HepG2 (cell line): ENCODE measurements at regions of chr22 and their contacts with region 1.

Region 1: GRCh38 chr22:28800308-28801077 is at the start of gene XBP1:
- DNase-seq: peak; percentile 89
- ATAC-seq: peak; percentile 95
- H3K4me3 ChIP-seq: peak within 1 kb of the TSS; percentile 66 to 99 (median 82)
- H3K27ac ChIP-seq: peak within 1 kb of the TSS; percentile 98
- H3K4me1 ChIP-seq: peaks cover 42% of the 10 kb centered on the region
- H3K27me3 ChIP-seq: no peaks in the 10 kb centered on the region; a peak in 1 of 5 replicates
- CTCF ChIP-seq: no peak
- EP300 ChIP-seq: no peak
- POLR2A ChIP-seq: peak; percentile 91 to 98
- RAD21 ChIP-seq: peak; percentile 49; the same call in 1 of the 2 replicates
- total RNA-seq, gene XBP1: 313 and 427 TPM in 2 replicates

Region 2: DNA sequence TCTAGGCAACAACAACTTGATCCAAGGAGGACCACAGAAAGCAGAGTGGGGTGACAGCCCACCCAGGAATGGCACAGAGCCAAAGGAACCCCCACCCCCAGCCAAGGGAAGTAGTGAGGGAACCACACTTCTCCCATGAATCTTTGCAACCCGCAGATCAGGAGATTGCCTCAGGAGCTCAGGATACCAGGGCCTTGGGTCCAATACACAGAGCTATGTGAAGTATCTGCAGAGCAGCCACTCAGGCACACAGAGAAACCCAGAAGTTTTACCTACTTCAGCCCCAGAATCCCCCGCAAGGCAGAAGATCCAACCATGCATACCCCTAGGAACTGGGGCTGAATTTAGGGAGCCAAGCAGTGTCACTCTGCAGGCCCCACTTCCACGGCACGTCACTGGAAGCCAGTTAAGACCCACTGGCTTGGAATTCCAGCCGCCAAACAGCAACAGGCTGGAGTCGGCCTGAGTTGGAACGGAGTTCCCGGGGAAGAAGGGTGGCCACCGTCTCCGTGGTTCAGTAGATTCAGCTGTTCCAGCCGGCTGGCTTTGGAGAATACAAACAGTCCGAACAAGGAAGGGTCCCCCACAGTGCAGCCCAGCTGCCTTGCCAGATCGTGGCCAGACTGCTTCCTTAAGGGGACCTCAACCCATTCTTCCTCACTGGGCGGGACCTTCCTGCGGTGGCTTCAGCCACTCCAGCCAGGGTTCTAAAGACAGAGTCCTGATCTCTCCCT is 294.9 kb before region 1 on chr22:
- CTCF ChIA-PET with region 1: no interaction called
- POLR2A ChIA-PET with region 1: no interaction called
- in situ Hi-C with region 1: no loop called
- intact Hi-C with region 1: no loop called
- DNase-seq: no peak
- ATAC-seq: no peak
- H3K4me3 ChIP-seq: no peak overlapping the region
- H3K27ac ChIP-seq: no peak overlapping the region
- H3K4me1 ChIP-seq: no peaks in the 10 kb centered on the region
- H3K27me3 ChIP-seq: no peaks in the 10 kb centered on the region; a peak in 1 of 5 replicates
- CTCF ChIP-seq: no peak
- EP300 ChIP-seq: no peak
- POLR2A ChIP-seq: no peak
- RAD21 ChIP-seq: no peak

Region 3: GRCh38 chr22:28594797-28595462 is 205.6 kb before region 1 on chr22:
- CTCF ChIA-PET with region 1: no interaction called
- POLR2A ChIA-PET with region 1: no interaction called
- in situ Hi-C with region 1: no loop called
- intact Hi-C with region 1: no loop called
- DNase-seq: peak; percentile 54
- ATAC-seq: peak; percentile 82
- H3K4me3 ChIP-seq: no peak overlapping the region
- H3K27ac ChIP-seq: no peak overlapping the region
- H3K4me1 ChIP-seq: no peaks in the 10 kb centered on the region
- H3K27me3 ChIP-seq: no peaks in the 10 kb centered on the region
- CTCF ChIP-seq: peak; percentile 74
- EP300 ChIP-seq: no peak
- POLR2A ChIP-seq: no peak
- RAD21 ChIP-seq: peak; percentile 64

Region 4: GRCh38 chr22:28810821-28811491 is 10.5 kb after region 1 on chr22:
- CTCF ChIA-PET with region 1: no interaction called
- POLR2A ChIA-PET with region 1: interaction called, 945 read pairs
- in situ Hi-C with region 1: no loop called
- intact Hi-C with region 1: loop called (anchors 1 kb)
- DNase-seq: peak; percentile 96
- ATAC-seq: peak; percentile 45
- H3K4me3 ChIP-seq: peak overlapping the region; percentile 38 to 51 (median 41); a peak in 4 of 6 replicates
- H3K27ac ChIP-seq: peak overlapping the region; percentile 98
- H3K4me1 ChIP-seq: peaks cover 94% of the 10 kb centered on the region
- H3K27me3 ChIP-seq: no peaks in the 10 kb centered on the region
- CTCF ChIP-seq: no peak
- EP300 ChIP-seq: peak; percentile 62 to 90; a peak in 2 of 4 replicates
- POLR2A ChIP-seq: no peak
- RAD21 ChIP-seq: no peak

Region 5: DNA sequence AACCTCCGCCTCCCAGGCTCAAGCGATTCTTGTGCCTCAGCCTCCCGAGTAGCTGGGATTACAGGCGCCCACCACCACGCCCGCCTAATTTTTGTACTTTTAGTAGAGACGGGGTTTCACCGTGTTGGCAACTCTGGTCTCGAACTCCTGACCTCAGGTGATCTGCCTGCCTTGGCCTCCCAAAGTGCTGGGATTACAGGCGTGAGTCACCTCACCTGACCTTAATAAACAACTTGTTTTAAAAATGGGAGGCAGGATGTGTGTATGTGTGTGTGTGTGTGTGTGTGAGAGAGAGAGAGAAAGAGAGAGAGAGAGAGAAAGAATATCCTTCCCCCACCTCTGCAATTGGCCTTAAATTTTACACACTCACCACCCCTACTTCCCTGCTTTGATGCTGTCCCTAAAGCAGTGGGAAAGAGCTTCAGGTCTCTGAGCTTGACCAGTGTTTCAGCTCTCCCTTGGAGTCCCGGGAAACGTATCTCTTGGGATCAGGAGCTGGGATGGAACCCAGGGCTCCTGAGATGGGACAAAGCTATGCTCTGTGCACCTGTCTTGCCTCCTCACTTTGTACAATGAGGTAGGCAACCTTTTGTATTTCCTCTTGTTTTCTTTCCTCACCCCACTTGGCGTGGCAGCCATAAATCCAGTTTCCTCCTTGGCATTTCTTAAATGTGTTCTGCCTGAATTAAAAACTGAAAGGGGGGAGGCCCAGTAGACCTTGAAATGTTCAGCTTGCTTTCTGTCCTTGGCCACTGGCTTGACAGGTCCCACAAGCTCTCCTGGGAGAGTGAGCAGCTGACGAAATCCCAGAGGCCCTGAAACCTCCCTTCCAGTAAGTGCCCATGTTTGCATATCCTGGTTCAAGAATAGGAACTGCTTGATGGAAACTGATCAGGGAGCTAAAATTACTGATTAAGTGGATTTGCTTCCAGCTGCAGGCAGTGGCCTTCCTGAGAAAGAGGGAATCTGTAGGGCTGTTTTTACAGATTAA is 17.7 kb after region 1 on chr22:
- CTCF ChIA-PET with region 1: no interaction called
- POLR2A ChIA-PET with region 1: interaction called, 945 read pairs
- in situ Hi-C with region 1: no loop called
- intact Hi-C with region 1: no loop called
- DNase-seq: peak; percentile 79
- ATAC-seq: peak; percentile 33
- H3K4me3 ChIP-seq: peak overlapping the region in 2 of 3 experiments; percentile 42 to 44; a peak in 4 of 6 replicates
- H3K27ac ChIP-seq: peak overlapping the region; percentile 91
- H3K4me1 ChIP-seq: peaks cover 100% of the 10 kb centered on the region
- H3K27me3 ChIP-seq: no peaks in the 10 kb centered on the region
- CTCF ChIP-seq: no peak
- EP300 ChIP-seq: peak in 1 of 2 experiments; percentile 85; a peak in 2 of 4 replicates
- POLR2A ChIP-seq: peak in 1 of 2 experiments; percentile 30; a peak in 1 of 4 replicates
- RAD21 ChIP-seq: 0 out of 2 replicates have a peak, but pooled peaks have one; percentile 4

Region 6: DNA sequence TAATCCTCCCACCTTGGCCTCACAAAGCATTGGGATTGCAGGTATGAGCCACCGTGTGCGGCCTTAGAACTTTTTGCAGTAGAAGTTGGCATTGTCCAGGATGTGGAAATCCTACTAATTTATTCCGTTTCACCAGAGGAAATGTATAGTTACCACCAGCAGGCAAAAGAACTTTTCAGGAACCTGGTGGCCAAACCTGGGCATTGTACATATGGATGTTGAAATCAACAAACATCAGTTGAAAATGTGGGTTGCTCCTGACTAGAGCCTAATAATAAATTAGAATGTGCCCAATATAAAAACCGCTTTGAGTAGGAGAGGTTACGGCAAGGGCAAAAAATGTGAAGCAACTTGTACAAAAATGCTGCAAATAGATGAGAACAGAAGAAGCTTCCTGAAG is 40.6 kb after region 1 on chr22:
- CTCF ChIA-PET with region 1: no interaction called
- POLR2A ChIA-PET with region 1: no interaction called
- in situ Hi-C with region 1: no loop called
- intact Hi-C with region 1: no loop called
- DNase-seq: peak; percentile 34
- ATAC-seq: peak; percentile 62
- H3K4me3 ChIP-seq: no peak overlapping the region
- H3K27ac ChIP-seq: no peak overlapping the region
- H3K4me1 ChIP-seq: peaks cover 33% of the 10 kb centered on the region
- H3K27me3 ChIP-seq: no peaks in the 10 kb centered on the region
- CTCF ChIP-seq: no peak
- EP300 ChIP-seq: no peak
- POLR2A ChIP-seq: no peak
- RAD21 ChIP-seq: no peak

Region 7: GRCh38 chr22:28894334-28894733 is 93.8 kb after region 1 on chr22:
- CTCF ChIA-PET with region 1: no interaction called
- POLR2A ChIA-PET with region 1: no interaction called
- in situ Hi-C with region 1: no loop called
- intact Hi-C with region 1: no loop called
- DNase-seq: no peak
- ATAC-seq: no peak
- H3K4me3 ChIP-seq: no peak overlapping the region
- H3K27ac ChIP-seq: no peak overlapping the region
- H3K4me1 ChIP-seq: peaks cover 99% of the 10 kb centered on the region
- H3K27me3 ChIP-seq: no peaks in the 10 kb centered on the region
- CTCF ChIP-seq: no peak
- EP300 ChIP-seq: no peak
- POLR2A ChIP-seq: no peak
- RAD21 ChIP-seq: no peak